ENCODE measurements at regions of chr3 and their contacts with region 1.

Region 1: GRCh38 chr3:192566706-192567290 is 160.5 kb downstream of the FGF12 start:
- DNase-seq: peak; percentile 41
- H3K4me3 Mint-ChIP-seq: no peak overlapping the region
- H3K27ac Mint-ChIP-seq: no peak overlapping the region
- H3K4me1 Mint-ChIP-seq: peaks cover 9% of the 10 kb centered on the region
- H3K27me3 Mint-ChIP-seq: peaks cover 14% of the 10 kb centered on the region

Region 2: GRCh38 chr3:192273001-192273400 is 293.8 kb before region 1 on chr3:
- intact Hi-C with region 1: no loop called
- DNase-seq: no peak
- H3K4me3 Mint-ChIP-seq: no peak overlapping the region
- H3K27ac Mint-ChIP-seq: no peak overlapping the region
- H3K4me1 Mint-ChIP-seq: no peaks in the 10 kb centered on the region
- H3K27me3 Mint-ChIP-seq: no peaks in the 10 kb centered on the region

Region 3: GRCh38 chr3:192467230-192468140 is 99.3 kb before region 1 on chr3:
- intact Hi-C with region 1: loop called (anchors 1 kb)
- DNase-seq: peak; percentile 32
- H3K4me3 Mint-ChIP-seq: no peak overlapping the region
- H3K27ac Mint-ChIP-seq: no peak overlapping the region
- H3K4me1 Mint-ChIP-seq: no peaks in the 10 kb centered on the region
- H3K27me3 Mint-ChIP-seq: peaks cover 15% of the 10 kb centered on the region

Region 4: DNA sequence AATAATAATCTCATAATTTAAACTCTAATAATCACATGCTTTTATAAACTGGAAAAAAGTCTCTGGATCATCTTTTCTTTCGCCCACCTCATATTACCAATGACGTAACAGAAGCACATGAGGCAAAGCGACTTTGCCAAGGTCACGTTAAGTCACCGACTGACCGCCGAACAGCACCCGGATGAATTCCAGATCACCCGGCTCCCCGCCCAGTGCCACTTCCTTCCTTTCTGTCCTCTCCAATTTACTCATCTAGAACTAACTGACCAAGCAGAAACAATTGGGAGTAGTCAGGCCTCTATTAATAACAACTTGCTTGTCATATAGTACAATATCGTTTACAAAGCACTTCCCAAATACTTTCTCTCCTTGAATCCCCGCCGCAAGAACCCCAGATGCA is 139.5 kb after region 1 on chr3:
- intact Hi-C with region 1: no loop called
- DNase-seq: no peak
- H3K4me3 Mint-ChIP-seq: no peak overlapping the region
- H3K27ac Mint-ChIP-seq: no peak overlapping the region
- H3K4me1 Mint-ChIP-seq: no peaks in the 10 kb centered on the region
- H3K27me3 Mint-ChIP-seq: peaks cover 4% of the 10 kb centered on the region

Region 5: DNA sequence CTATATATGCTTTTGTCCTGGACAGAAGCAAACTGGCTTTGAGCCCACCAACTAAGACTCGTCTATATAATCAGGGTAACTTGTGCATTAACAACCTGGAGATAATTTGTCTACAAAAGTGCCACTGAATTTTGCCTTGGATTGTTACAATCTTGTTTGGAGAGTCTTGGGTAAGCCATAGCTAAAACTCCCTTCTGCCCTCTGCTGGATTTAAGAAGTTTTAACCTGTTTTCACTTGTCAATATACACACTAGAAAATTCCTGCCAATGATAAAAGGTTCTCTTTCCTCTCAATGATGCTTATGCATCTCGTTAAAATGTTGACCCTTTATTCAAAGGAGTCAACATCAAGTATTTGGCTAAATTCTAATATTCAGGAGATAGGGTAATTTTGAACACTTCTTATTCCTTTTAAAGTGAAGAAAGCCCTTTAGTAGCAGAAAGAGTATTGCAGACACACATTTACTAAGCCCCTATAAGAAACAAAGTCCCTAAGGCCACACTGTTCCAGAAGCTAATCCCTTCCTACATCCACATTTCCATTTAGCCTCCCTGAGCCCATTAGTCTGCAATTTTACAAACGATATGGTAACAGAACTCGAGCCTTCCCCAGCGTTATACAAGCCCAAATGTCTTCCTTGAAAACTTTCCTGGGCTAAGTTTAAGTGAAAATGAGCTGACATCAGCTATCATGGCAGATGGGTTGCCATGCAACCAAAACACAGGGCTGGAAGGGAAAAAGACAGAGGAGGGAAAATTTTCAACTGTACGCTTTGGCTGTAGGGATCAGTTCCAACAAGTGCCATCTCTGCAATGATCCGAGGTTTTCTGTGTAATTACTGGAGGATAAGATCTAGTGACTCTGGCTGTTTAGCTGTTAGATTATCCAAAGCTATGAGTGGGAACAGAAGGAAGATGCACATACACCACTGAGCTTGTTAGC is 236.4 kb after region 1 on chr3:
- intact Hi-C with region 1: loop called (anchors 1 kb)
- DNase-seq: no peak
- H3K4me3 Mint-ChIP-seq: no peak overlapping the region
- H3K27ac Mint-ChIP-seq: no peak overlapping the region
- H3K4me1 Mint-ChIP-seq: peaks cover 11% of the 10 kb centered on the region
- H3K27me3 Mint-ChIP-seq: no peaks in the 10 kb centered on the region

Region 6: GRCh38 chr3:193040836-193041672 is 474.3 kb after region 1 on chr3:
- intact Hi-C with region 1: loop called (anchors 1 kb)
- DNase-seq: no peak
- H3K4me3 Mint-ChIP-seq: no peak overlapping the region
- H3K27ac Mint-ChIP-seq: no peak overlapping the region
- H3K4me1 Mint-ChIP-seq: peaks cover 10% of the 10 kb centered on the region
- H3K27me3 Mint-ChIP-seq: peaks cover 8% of the 10 kb centered on the region

Region 7: GRCh38 chr3:193572426-193572908 is 1005.7 kb after region 1 on chr3:
- intact Hi-C with region 1: loop called (anchors 1 kb)
- DNase-seq: peak; percentile 26
- H3K4me3 Mint-ChIP-seq: no peak overlapping the region
- H3K27ac Mint-ChIP-seq: no peak overlapping the region
- H3K4me1 Mint-ChIP-seq: peaks cover 4% of the 10 kb centered on the region
- H3K27me3 Mint-ChIP-seq: peaks cover 6% of the 10 kb centered on the region